CD8-positive, alpha-beta T cell (primary cell): ENCODE measurements at regions of chrX and their contacts with region 1.

Region 1: DNA sequence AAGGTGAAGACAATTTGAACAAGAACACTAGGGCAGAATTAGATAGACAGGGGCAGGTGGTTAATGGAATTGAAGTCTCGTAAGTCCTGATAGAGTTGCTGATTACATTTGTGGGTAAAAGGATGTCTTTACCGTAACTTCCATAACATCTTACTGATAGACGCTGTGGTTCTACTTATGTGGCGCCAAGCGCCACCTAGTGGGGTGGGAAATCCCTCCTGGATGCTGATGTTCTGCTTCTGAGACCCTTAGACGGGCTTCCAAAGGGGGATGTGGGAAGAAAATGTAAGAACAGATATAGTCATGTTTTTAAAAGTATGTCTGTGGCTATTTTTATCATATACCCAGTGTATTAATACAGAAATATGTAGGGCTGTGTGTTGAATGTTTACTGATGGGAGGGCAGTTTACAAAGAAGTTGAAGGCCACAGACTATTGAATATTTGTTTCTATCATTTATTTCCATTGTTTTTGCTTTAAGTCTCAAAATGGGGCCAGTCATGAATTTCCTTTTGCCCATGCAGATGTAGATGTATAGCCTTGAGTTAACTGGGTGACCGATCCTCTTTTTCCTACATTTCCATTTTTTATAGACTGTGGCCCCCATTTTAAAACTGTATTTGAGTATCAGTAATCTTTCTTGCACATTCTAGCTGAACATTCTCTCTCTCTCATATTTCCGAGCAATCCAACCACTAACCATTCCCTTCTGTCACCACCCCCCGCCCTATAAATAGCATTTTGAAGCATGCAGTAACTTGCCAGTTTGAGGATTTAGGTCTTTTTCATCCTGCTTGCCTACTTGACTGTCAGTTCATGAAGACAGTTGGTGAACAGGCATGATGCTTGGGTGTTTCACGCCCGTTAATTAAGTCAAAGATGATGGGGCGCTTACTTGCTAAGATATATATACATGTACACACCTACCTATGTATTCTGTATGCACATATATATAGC is 12.1 kb upstream of the TLR8 start:
- DNase-seq: peak; percentile 4 to 64 (median 40)
- ATAC-seq: peak; percentile 49
- H3K4me3 ChIP-seq: no peak overlapping the region
- H3K4me3 Mint-ChIP-seq: no peak overlapping the region
- H3K27ac ChIP-seq: no peak overlapping the region
- H3K27ac Mint-ChIP-seq: peak overlapping the region; percentile 24
- H3K4me1 ChIP-seq: peaks cover 3% of the 10 kb centered on the region
- H3K4me1 Mint-ChIP-seq: peaks cover 25% of the 10 kb centered on the region
- H3K27me3 ChIP-seq: no peaks in the 10 kb centered on the region
- H3K27me3 Mint-ChIP-seq: no peaks in the 10 kb centered on the region
- CTCF ChIP-seq: peak; percentile 56

Region 2: GRCh38 chrX:12709047-12709446 is 185.3 kb before region 1 on chrX:
- CTCF ChIA-PET with region 1: no interaction called
- POLR2A ChIA-PET with region 1: no interaction called
- intact Hi-C with region 1: loop called in 1 of 2 experiments (anchors 5 kb)
- DNase-seq: no peak
- ATAC-seq: no peak
- H3K4me3 ChIP-seq: no peak overlapping the region
- H3K4me3 Mint-ChIP-seq: no peak overlapping the region
- H3K27ac ChIP-seq: no peak overlapping the region
- H3K27ac Mint-ChIP-seq: no peak overlapping the region
- H3K4me1 ChIP-seq: no peaks in the 10 kb centered on the region
- H3K4me1 Mint-ChIP-seq: no peaks in the 10 kb centered on the region
- H3K27me3 ChIP-seq: no peaks in the 10 kb centered on the region
- H3K27me3 Mint-ChIP-seq: no peaks in the 10 kb centered on the region
- CTCF ChIP-seq: no peak